Calu3 (cell line): ENCODE measurements at regions of chr14 and their contacts with region 1.

Region 1: DNA sequence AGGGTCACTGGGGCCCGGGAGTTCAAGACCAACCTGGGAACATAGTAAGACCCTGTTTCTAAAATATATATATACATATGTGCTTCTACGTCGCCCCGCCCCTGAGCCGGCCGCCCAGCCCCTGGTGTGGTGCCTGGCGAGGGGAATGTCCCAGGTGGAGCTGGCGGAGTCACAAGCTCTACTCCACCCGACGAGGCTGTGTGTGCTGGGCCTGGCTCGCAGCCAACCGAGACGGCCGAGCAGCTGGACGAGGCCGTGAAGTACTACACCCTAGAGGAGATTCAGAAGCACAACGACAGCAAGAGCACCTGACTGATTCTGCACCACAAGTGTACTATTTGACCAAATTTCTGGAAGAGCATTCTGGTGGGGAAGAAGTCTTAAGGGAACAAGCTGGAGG is 22.1 kb upstream of the ITPK1 start:
- DNase-seq: peak; percentile 71
- H3K4me3 Mint-ChIP-seq: no peak overlapping the region
- H3K27ac Mint-ChIP-seq: no peak overlapping the region
- H3K4me1 Mint-ChIP-seq: peaks cover 17% of the 10 kb centered on the region
- H3K27me3 Mint-ChIP-seq: no peaks in the 10 kb centered on the region
- CTCF ChIP-seq: no peak

Region 2: DNA sequence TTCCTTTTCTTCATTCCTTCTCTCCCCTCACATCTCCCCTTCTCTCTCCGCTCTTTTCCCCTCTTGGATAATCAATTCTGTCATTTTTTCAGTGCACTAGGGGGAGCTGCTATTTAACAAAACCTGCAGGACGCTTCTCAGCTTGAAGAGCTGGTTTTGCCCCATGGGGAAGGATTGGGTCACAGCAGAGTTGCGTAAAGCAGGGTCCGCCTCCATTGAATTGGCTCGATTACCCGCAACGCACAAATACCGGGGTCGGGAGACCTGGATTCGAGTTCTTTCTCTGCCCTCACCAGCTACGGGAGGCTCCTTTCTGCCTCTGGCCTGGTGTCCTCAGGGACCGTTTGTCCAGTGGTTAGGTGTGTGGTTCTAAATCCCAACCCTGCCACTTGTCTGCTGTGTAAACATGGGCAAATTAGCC is 257.0 kb before region 1 on chr14:
- CTCF ChIA-PET with region 1: interaction called, 3 read pairs
- intact Hi-C with region 1: loop called (anchors 1 kb)
- DNase-seq: peak; percentile 64
- H3K4me3 Mint-ChIP-seq: no peak overlapping the region
- H3K27ac Mint-ChIP-seq: no peak overlapping the region
- H3K4me1 Mint-ChIP-seq: no peaks in the 10 kb centered on the region
- H3K27me3 Mint-ChIP-seq: peaks cover 66% of the 10 kb centered on the region
- CTCF ChIP-seq: peak; percentile 41

Region 3: DNA sequence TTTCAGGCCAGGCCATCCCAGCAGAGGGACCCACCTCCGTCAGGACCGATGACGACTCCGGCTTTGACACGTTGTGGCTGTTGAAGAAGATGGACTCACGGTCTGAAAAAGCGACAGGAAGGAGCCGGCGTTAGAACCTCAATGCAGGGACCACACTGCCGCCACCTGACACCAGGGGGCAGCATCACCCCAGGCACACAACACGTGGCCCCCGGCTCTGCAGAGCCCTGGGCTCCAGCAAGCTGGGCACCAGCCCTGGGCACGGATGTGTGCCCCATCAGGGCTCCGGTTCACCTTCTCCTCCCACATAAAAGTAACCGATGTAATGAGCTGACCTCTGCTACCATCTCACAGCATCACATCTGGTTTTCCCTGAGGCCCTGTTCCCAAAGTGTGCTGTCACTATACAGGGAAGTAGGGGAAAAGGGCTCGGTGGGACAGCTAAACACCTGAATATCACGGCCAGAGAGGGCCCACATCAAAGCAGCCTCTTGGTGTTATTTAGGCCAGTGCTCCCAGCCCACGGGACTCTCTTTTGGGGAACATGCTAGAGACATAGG is 185.9 kb before region 1 on chr14:
- CTCF ChIA-PET with region 1: interaction called, 6 read pairs
- intact Hi-C with region 1: loop called (anchors 1 kb)
- DNase-seq: peak; percentile 87
- H3K4me3 Mint-ChIP-seq: no peak overlapping the region
- H3K27ac Mint-ChIP-seq: no peak overlapping the region
- H3K4me1 Mint-ChIP-seq: peaks cover 8% of the 10 kb centered on the region
- H3K27me3 Mint-ChIP-seq: no peaks in the 10 kb centered on the region
- CTCF ChIP-seq: peak; percentile 89

Region 4: GRCh38 chr14:92964124-92965109 is 173.4 kb before region 1 on chr14:
- CTCF ChIA-PET with region 1: no interaction called
- intact Hi-C with region 1: loop called (anchors 5 kb)
- DNase-seq: no peak
- H3K4me3 Mint-ChIP-seq: no peak overlapping the region
- H3K27ac Mint-ChIP-seq: no peak overlapping the region
- H3K4me1 Mint-ChIP-seq: peaks cover 20% of the 10 kb centered on the region
- H3K27me3 Mint-ChIP-seq: no peaks in the 10 kb centered on the region
- CTCF ChIP-seq: no peak

Region 5: DNA sequence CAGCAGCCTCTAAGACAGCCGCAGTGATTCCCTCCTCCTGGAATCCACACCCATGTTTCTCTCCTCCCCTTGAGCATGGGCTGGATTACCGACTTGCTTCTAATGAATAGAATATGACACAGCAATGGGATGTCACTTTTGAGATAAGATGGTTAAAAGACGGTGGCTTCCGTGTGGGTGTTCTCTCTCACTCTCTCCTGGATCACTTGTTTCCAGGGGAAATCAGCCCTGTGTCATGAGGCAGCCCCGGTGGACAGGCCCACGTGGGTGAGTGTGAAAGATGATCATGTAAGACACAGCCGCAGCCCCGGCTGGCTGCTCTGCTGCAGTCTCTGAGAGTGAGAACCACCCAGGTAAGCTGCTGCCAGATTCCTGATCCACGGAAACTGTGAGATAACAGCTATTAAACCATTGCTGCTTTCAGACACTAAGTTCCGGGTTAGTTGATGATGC is 36.1 kb after region 1 on chr14:
- CTCF ChIA-PET with region 1: no interaction called
- intact Hi-C with region 1: loop called (anchors 1 kb)
- DNase-seq: no peak
- H3K4me3 Mint-ChIP-seq: no peak overlapping the region
- H3K27ac Mint-ChIP-seq: no peak overlapping the region
- H3K4me1 Mint-ChIP-seq: peaks cover 10% of the 10 kb centered on the region
- H3K27me3 Mint-ChIP-seq: no peaks in the 10 kb centered on the region
- CTCF ChIP-seq: no peak